Panc1 (cell line): ENCODE measurements at regions of chr12 and their contacts with region 1.

Region 1: GRCh38 chr12:105766029-105766428 is 372.7 kb downstream of the NUAK1 start:
- DNase-seq: no peak
- ATAC-seq: no peak
- H3K4me3 ChIP-seq: no peak overlapping the region
- H3K27ac ChIP-seq: no peak overlapping the region
- H3K4me1 ChIP-seq: peaks cover 2% of the 10 kb centered on the region; the same call in 1 of the 2 replicates
- H3K27me3 ChIP-seq: no peaks in the 10 kb centered on the region
- CTCF ChIP-seq: no peak

Region 2: DNA sequence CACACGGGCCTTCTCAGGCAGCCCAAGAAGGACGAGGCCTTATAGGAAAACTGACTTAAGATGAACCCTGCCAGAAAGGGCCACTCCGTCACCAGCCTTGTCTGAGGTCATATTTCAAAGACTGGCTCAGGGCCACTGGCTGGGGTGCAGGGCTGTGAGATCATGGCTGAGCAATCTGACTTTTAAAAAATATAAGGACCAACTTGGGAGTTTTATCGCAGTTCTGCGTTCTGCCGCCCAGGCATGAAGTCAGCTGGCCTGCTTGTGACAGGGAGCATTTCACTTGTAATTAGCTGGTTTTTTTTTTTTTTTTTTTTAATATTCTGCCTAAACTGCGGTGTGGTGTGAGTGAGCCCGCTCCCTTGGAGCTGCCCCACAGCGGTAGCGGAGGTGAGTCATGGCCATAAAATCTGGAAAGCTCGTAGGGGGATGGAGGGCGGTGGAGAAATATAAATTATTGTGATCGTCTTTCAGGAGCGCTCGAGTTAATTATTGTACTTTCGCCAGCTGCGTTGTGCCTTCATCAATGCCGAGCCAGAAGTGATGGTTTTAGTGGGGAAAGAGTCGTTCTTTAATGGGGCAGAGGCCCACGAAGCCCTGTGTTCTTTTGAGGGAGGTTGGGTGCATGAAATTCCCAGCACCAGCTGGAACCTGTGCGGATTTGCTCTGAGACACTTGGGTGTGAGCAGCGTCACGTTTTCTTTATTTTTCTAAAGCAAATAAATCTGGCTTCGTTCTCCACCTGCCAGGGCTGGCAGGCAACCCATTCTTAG is 203.6 kb before region 1 on chr12:
- CTCF ChIA-PET with region 1: interaction called, 11 read pairs
- POLR2A ChIA-PET with region 1: no interaction called
- in situ Hi-C with region 1: no loop called
- intact Hi-C with region 1: no loop called
- DNase-seq: peak; percentile 48
- ATAC-seq: peak; percentile 95
- H3K4me3 ChIP-seq: peak overlapping the region; percentile 20 to 47
- H3K27ac ChIP-seq: peak overlapping the region; percentile 92
- H3K4me1 ChIP-seq: peaks cover 19% of the 10 kb centered on the region
- H3K27me3 ChIP-seq: no peaks in the 10 kb centered on the region
- CTCF ChIP-seq: no peak